Upper lobe of right lung (tissue), 1 donor: ENCODE measurements at regions of chrX and their contacts with region 1.

Region 1: GRCh38 chrX:151675121-151675746 is 20.0 kb upstream of the PRRG3 start:
- DNase-seq: no peak
- ATAC-seq: no peak
- H3K4me3 ChIP-seq: no peak overlapping the region
- H3K27ac ChIP-seq: no peak overlapping the region
- H3K4me1 ChIP-seq: no peaks in the 10 kb centered on the region
- H3K27me3 ChIP-seq: no peaks in the 10 kb centered on the region
- CTCF ChIP-seq: no peak

Region 2: DNA sequence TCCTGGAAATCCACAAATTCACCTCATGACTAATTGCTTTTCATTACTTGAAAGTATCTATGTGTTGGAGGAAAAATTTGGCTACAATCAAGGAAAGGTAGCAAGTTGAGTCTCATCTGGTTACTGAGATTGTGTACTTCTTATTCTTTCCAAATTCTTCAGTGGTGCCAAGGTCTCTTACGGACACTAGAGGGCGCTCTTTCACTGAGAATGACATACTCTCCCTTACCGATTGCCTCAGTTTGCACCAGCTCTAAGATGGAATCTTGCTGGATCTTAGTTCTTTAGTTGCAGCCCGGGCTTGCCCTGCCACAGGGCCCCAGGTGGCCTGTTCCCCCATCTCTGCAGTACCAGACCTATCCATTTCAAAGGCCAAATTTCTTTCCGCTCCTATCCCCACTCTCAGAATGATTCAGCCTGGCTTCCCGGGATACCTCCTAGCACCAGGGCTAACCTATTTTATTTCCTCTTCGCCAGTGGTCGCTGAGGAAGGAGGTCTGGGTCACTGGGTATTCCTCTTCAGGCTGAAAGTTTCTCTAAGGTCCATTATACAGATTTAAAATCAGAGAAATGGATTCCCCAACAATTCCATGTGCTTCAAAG is 523.5 kb before region 1 on chrX:
- intact Hi-C with region 1: loop called (anchors 10 kb)
- DNase-seq: no peak
- ATAC-seq: peak; percentile 76
- H3K4me3 ChIP-seq: no peak overlapping the region
- H3K27ac ChIP-seq: no peak overlapping the region
- H3K4me1 ChIP-seq: no peaks in the 10 kb centered on the region
- H3K27me3 ChIP-seq: no peaks in the 10 kb centered on the region
- CTCF ChIP-seq: peak; percentile 77

Region 3: GRCh38 chrX:151458824-151459223 is 216.4 kb before region 1 on chrX:
- intact Hi-C with region 1: no loop called
- DNase-seq: no peak
- ATAC-seq: no peak
- H3K4me3 ChIP-seq: no peak overlapping the region
- H3K27ac ChIP-seq: no peak overlapping the region
- H3K4me1 ChIP-seq: no peaks in the 10 kb centered on the region
- H3K27me3 ChIP-seq: no peaks in the 10 kb centered on the region
- CTCF ChIP-seq: no peak